GM12878 (cell line): ENCODE measurements at regions of chr13 and their contacts with region 1.

Region 1: DNA sequence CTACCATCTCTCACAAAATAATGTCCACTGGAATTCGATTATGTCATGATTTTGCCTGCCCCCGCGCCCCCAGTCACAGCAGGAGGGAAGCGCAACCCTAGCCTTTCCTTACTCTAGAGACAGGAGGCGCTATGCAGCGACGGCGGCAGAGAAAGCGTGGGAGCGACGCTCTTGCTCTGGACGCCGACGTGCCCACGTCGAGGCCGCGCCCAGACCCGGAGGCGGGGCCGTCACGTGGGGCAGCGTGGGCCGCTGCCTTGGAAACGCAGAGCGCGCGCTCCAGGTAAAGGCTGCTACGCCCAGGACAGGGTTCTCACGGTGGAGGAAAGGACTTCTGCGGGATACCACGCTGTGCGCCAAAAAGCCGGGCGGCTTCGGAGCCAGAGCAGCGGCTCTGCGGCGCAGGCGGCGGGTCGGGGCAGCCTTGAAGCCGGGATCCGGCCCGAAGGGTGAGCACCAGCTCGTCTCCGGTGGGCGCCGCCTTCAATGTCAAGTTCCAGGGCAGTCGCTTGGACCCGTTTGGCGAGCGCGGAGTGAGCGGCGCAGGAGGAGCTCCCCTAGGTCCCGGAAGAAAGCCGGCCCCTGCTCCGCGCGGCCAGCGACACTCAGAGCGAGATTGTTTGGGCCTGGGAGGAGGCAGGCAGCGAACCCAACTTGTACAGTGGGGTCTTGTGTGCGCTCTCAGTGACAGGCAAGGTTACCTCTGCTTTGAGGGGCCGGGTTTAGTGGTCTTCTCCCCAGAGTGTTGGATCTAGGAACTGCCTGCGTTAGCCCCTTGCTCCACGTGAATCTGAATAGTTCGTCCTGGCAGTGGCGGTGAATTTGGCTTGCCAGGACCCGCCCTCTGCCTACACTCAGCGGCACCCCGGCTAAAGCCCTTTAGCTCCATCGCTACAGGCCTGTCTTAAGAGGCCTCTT is 121.7 kb downstream of the MRPL57 start:
- DNase-seq: peak; percentile 67
- ATAC-seq: peak; percentile 96
- H3K4me3 ChIP-seq: peak overlapping the region; percentile 78
- H3K27ac ChIP-seq: peak overlapping the region; percentile 63
- H3K4me1 ChIP-seq: no peaks in the 10 kb centered on the region
- H3K27me3 ChIP-seq: no peaks in the 10 kb centered on the region
- CTCF ChIP-seq: peak; percentile 81 to 94 (median 92)
- EP300 ChIP-seq: no peak
- POLR2A ChIP-seq: peak; percentile 27
- RAD21 ChIP-seq: peak; percentile 53

Region 2: DNA sequence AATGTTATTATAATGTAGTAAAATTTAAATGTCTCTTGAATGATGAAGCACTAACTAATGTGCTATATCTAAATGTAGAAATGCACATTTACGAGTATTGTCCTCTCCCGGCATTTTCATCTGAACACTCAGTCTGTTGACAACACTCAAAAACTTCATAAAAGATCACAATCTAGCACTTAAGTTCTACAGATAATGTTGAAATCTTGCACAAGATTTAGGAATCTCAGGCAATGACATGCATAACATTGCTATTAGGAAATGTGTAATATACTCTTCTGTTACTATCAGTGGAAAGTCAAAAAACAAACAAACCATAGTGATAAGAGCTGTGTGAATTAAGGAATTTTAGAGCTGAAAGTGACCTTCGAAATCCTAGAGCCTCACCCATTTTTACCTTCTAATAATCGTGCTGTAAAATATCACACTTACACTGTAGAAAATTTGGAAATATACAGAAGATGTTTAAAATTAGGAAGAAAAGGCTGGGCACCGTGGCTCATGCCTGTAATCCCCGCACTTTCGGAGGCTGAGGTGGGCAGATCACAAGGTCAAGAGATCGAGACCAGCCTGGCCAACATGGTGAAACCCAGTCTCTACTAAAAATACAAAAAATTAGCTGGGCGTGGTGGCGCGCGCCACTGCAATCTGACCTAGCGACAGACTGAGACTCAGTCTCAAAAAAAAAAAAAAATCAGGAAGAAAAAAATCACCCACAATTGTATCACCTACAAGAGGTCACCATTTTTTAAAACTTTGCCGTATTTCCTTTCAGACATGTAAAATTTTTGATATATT is 357.9 kb before region 1 on chr13:
- CTCF ChIA-PET with region 1: interaction called, 4 read pairs
- POLR2A ChIA-PET with region 1: no interaction called
- RAD21 ChIA-PET with region 1: interaction called, 3 read pairs
- SMC1A ChIA-PET with region 1: interaction called, 5 read pairs
- in situ Hi-C with region 1: no loop called
- intact Hi-C with region 1: loop called (anchors 5 kb)
- DNase-seq: no peak
- ATAC-seq: no peak
- H3K4me3 ChIP-seq: no peak overlapping the region
- H3K27ac ChIP-seq: no peak overlapping the region
- H3K4me1 ChIP-seq: no peaks in the 10 kb centered on the region
- H3K27me3 ChIP-seq: no peaks in the 10 kb centered on the region
- CTCF ChIP-seq: no peak
- EP300 ChIP-seq: no peak
- POLR2A ChIP-seq: no peak
- RAD21 ChIP-seq: no peak

Region 3: DNA sequence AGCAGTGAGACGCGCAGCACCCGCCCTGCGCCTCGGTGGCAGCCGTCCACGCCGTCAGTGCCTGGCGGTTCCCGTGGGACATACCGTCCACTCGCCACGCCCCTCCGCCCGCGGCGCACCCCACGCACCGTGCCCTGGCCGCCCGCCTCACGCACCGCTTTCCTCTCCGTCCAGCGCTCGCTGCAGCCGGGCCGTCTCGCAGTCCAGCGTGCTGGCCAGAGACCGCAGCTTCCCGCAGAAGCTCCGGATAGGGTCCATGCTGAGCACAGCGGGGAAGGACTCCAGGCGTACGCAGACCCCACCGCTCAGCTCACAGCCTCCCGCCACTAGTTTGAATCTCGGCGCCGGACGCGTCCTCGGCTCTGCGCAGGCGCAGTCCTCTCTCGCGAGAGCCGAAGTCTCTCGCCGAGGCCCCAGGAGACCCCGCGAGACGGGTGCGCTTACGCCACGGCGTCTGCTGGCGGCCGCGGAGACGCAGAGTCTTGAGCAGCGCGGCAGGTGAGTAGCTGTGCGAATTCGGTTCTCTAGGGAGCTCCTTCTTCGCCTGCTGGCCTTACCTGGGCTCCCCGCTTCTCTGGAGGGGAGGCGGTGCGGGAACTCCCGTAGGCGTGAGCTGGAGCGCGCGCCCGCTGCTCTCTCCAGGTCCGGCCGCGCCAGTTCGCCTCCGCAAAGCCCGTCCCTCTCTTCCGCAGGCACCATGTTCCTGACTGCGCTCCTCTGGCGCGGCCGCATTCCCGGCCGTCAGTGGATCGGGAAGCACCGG is 121.8 kb before region 1 on chr13 and contains the starts of genes MRPL57 and SKA3:
- CTCF ChIA-PET with region 1: interaction called, 9 read pairs
- POLR2A ChIA-PET with region 1: no interaction called
- RAD21 ChIA-PET with region 1: interaction called, 11 read pairs
- SMC1A ChIA-PET with region 1: interaction called, 6 read pairs
- in situ Hi-C with region 1: no loop called
- intact Hi-C with region 1: loop called (anchors 5 kb)
- DNase-seq: peak; percentile 79
- ATAC-seq: peak; percentile 94
- H3K4me3 ChIP-seq: peak within 1 kb of the TSS; percentile 89
- H3K27ac ChIP-seq: peak within 1 kb of the TSS; percentile 93
- H3K4me1 ChIP-seq: no peaks in the 10 kb centered on the region
- H3K27me3 ChIP-seq: no peaks in the 10 kb centered on the region
- CTCF ChIP-seq: no peak
- EP300 ChIP-seq: 0 out of 4 replicates have a peak, but pooled peaks of 1 of the 2 experiments have one; percentile 32
- POLR2A ChIP-seq: peak; percentile 98
- RAD21 ChIP-seq: no peak
- polyA plus RNA-seq, gene MRPL57: 13.2 to 25.8 TPM
- polyA plus RNA-seq, gene SKA3: 13.5 to 15.1 TPM

Region 4: GRCh38 chr13:21330126-21330861 is 32.1 kb after region 1 on chr13:
- CTCF ChIA-PET with region 1: interaction called, 29 read pairs
- POLR2A ChIA-PET with region 1: no interaction called
- RAD21 ChIA-PET with region 1: interaction called, 6 read pairs
- SMC1A ChIA-PET with region 1: interaction called, 12 read pairs
- in situ Hi-C with region 1: no loop called
- intact Hi-C with region 1: loop called (anchors 1 kb)
- DNase-seq: peak; percentile 60
- ATAC-seq: peak; percentile 94
- H3K4me3 ChIP-seq: peak overlapping the region; percentile 37; the same call in 1 of the 2 replicates
- H3K27ac ChIP-seq: peak overlapping the region; percentile 53
- H3K4me1 ChIP-seq: peaks cover 30% of the 10 kb centered on the region
- H3K27me3 ChIP-seq: no peaks in the 10 kb centered on the region
- CTCF ChIP-seq: no peak
- EP300 ChIP-seq: no peak
- POLR2A ChIP-seq: no peak
- RAD21 ChIP-seq: no peak

Region 5: DNA sequence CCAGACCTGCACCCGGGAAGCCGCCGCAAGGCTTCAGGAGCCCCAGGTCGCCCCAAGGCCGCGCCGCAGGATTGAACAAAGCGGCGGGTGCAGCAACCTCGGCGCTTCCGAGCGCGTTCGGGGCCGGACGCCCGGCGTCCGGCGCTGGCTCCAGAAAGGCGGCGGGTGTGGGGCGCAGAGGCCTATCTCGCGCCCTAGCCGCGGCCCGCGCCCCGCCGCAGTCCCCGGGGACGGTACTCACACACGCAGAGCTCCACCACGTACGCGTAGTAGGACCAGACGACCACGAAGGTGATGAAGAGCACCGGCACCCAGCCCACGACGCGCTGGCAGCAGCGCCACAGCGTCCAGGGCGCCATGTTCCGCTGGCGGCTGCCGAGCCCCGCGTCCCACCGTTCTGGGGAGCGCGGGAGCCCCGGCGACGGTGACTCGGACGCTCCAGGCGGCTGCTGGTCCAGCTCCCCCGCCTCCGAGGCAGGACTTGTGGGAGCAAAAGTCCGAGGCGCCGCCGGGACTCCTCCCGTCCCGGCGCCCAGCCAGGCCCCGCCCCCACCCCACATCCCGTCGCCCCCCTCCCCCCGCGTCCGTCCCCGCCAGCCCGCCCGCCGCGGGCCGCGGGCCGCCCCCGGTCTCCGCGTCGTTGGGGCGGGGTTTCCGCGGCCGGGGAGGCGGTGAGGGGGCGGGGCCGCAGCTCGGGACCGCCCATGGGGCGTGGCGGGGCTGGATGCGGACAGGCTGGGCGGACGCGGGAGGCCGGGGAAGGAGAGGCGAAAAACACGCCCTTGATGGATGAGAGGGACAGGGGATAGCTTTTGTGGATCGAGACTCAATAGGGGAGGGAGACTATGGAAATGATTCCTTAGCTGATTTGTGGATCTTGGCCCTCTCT is 160.9 kb after region 1 on chr13 and contains the start of gene ZDHHC20:
- CTCF ChIA-PET with region 1: interaction called, 11 read pairs
- POLR2A ChIA-PET with region 1: no interaction called
- RAD21 ChIA-PET with region 1: interaction called, 7 read pairs
- SMC1A ChIA-PET with region 1: interaction called, 6 read pairs
- in situ Hi-C with region 1: no loop called
- intact Hi-C with region 1: loop called (anchors 5 kb)
- DNase-seq: no peak
- ATAC-seq: peak; percentile 87
- H3K4me3 ChIP-seq: peak within 1 kb of the TSS; percentile 74
- H3K27ac ChIP-seq: peak within 1 kb of the TSS; percentile 78
- H3K4me1 ChIP-seq: peaks cover 4% of the 10 kb centered on the region; the same call in 1 of the 2 replicates
- H3K27me3 ChIP-seq: no peaks in the 10 kb centered on the region
- CTCF ChIP-seq: no peak
- EP300 ChIP-seq: no peak
- POLR2A ChIP-seq: peak; percentile 85
- RAD21 ChIP-seq: no peak
- polyA plus RNA-seq, gene ZDHHC20: 8.6 to 12.3 TPM

Region 6: GRCh38 chr13:22793598-22794134 is 1495.5 kb after region 1 on chr13:
- CTCF ChIA-PET with region 1: no interaction called
- POLR2A ChIA-PET with region 1: no interaction called
- RAD21 ChIA-PET with region 1: interaction called, 3 read pairs
- SMC1A ChIA-PET with region 1: no interaction called
- in situ Hi-C with region 1: loop called (anchors 25 kb)
- intact Hi-C with region 1: loop called (anchors 10 kb)
- DNase-seq: no peak
- ATAC-seq: no peak
- H3K4me3 ChIP-seq: no peak overlapping the region
- H3K27ac ChIP-seq: no peak overlapping the region
- H3K4me1 ChIP-seq: no peaks in the 10 kb centered on the region
- H3K27me3 ChIP-seq: no peaks in the 10 kb centered on the region
- CTCF ChIP-seq: no peak
- EP300 ChIP-seq: no peak
- POLR2A ChIP-seq: no peak
- RAD21 ChIP-seq: no peak